ENCODE measurements at regions of chr12 and their contacts with region 1.

Region 1: DNA sequence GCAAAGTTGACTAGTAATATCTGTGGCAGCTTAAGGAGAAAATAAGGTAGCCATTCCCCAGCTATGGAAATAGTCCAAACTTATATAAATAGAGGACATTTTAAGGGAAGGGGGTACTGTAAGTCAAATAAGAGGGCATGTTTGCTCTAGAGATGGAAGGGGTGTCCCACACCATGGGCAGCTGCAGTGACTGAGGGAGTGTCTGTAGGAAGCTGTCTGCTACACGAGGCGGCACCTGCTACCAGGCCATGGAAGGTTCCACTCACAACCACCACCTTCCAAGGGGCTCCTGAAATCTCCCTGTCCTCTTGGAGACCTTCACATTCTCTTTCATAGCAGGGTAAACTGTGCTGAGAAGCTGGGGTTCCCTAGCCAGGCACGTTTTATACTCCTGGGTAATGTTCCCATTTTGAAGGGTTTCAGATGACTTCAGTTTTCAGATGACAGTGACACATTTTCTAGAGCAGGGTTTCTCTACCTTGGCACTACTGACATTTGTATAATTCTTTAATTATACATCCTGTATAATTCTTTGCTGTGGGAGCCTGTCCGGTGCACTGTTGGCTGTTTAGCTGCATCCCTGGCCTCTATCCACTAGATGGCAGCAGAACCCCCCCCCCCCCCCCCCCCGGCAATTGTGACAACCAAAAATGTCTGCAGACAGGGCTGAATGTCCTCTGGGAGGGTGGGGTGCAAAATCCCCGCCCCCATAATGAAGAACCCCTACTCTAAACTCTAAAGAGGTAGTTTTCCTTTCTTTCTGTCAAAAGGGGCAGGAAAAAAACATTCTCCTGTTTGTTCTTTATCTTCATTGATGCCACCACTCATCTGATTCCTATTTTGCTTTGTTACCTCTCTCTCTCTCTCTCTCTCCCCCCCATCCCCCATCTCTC is 11.6 kb upstream of the SMCO2 start:
- DNase-seq: peak in 1 of 5 donors; percentile 17
- H3K4me3 ChIP-seq: no peak overlapping the region
- H3K4me3 Mint-ChIP-seq: no peak overlapping the region
- H3K27ac ChIP-seq: no peak overlapping the region
- H3K27ac Mint-ChIP-seq: no peak overlapping the region
- H3K4me1 ChIP-seq: no peaks in the 10 kb centered on the region
- H3K4me1 Mint-ChIP-seq: peaks cover 0 to 21% (median 0%) of the 10 kb centered on the region in 3 donors
- H3K27me3 ChIP-seq: no peaks in the 10 kb centered on the region
- H3K27me3 Mint-ChIP-seq: peaks cover 8 to 50% of the 10 kb centered on the region in 2 donors

Region 2: DNA sequence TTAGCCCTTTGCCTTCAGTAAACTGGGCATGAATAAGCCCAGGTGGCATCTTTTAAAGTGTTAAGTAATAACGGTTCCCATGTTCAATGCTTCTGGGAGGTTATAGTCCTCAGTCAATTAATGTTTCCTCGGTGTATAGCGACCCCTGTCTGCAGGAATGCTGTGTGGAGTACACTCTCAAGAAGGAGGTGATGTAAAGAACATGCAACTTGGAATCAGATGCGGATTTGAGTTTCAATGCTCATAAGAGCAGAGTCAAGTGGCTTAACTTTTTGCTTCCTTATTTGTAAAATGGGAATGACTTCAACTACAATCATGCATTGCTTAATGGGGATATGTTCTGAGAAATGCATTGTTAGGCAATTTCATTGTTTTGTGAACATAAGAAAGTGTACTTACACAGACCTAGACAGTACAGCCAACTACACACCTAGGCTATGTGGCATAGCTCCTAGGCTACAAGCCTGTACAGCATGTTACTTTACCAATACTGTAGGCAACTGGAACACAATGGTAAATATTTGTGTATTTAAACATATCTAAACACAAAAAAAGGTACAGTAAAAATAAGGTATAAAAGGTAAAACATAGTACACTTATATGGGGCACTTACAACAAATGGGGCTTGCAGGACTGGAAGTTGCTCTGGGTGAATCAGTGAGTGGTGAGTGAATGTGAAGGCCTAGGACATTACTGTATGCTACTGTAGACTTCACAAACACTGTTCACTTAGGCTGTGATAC is 269.0 kb after region 1 on chr12:
- CTCF ChIA-PET with region 1: interaction called, 15 read pairs
- POLR2A ChIA-PET with region 1: no interaction called
- DNase-seq: peak; percentile 40 to 74 (median 44)
- H3K4me3 ChIP-seq: no peak overlapping the region
- H3K4me3 Mint-ChIP-seq: no peak overlapping the region
- H3K27ac ChIP-seq: no peak overlapping the region
- H3K27ac Mint-ChIP-seq: no peak overlapping the region
- H3K4me1 ChIP-seq: no peaks in the 10 kb centered on the region
- H3K4me1 Mint-ChIP-seq: no peaks in the 10 kb centered on the region
- H3K27me3 ChIP-seq: no peaks in the 10 kb centered on the region
- H3K27me3 Mint-ChIP-seq: peaks cover 6 to 30% of the 10 kb centered on the region in 2 donors

Measured in CD8-positive, alpha-beta memory T cell (primary cell).